Mammary epithelial cell (primary cell): ENCODE measurements at regions of chr10 and their contacts with region 1.

Region 1: GRCh38 chr10:97676770-97677581 is 10.1 kb downstream of the AVPI1 start:
- DNase-seq: peak; percentile 52
- H3K4me3 ChIP-seq: no peak overlapping the region
- H3K27ac ChIP-seq: no peak overlapping the region
- H3K4me1 ChIP-seq: peaks cover 4% of the 10 kb centered on the region
- H3K27me3 ChIP-seq: no peaks in the 10 kb centered on the region
- CTCF ChIP-seq: peak; percentile 87 to 88

Region 2: DNA sequence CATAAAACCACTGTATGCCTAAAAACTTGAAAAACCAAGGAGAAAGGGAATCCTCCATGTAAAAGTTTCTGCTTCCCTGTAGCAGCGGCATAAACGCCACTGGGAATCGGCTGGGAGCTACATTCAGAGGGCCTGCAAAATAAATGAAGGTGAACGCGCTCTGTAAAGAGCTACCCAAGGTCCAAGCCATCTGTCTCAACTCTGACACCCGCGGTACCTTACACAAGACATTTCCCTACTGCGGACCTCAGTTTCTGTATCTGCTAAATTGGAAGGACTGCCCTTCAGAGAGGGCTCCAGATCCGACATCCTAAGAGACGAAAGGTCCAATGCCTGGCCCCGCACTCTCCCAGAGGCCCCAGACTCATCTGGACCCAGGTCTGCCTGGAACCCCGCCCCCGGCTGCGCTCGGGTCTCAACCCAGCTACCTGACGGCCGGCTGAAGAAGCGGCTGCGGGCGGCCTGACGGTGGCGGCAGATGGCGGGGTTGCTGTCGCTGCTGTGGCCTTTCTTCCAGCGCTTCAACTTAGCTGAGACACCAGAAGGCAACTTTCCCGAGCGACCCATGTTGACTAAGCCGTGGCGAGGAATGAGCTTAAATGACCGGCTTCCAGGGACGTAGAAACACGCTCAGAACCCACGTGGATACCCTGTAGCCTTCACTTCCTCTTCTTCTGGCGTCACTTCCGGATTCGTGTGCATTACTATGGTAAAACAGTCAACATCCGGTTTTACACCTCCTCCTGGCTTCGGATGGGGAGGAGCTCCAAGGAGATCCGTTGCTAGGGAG is 276.1 kb before region 1 on chr10 and contains the start of gene RRP12:
- CTCF ChIA-PET with region 1: no interaction called
- dilution Hi-C with region 1: no loop called
- in situ Hi-C with region 1: no loop called
- intact Hi-C with region 1: no loop called
- DNase-seq: peak; percentile 97
- H3K4me3 ChIP-seq: peak within 1 kb of the TSS; percentile 60 to 92 (median 88)
- H3K27ac ChIP-seq: peak within 1 kb of the TSS; percentile 95
- H3K4me1 ChIP-seq: no peaks in the 10 kb centered on the region
- H3K27me3 ChIP-seq: no peaks in the 10 kb centered on the region
- CTCF ChIP-seq: peak in 1 of 2 donors; percentile 19
- total RNA-seq, gene RRP12: 35.8 to 63.1 TPM

Region 3: DNA sequence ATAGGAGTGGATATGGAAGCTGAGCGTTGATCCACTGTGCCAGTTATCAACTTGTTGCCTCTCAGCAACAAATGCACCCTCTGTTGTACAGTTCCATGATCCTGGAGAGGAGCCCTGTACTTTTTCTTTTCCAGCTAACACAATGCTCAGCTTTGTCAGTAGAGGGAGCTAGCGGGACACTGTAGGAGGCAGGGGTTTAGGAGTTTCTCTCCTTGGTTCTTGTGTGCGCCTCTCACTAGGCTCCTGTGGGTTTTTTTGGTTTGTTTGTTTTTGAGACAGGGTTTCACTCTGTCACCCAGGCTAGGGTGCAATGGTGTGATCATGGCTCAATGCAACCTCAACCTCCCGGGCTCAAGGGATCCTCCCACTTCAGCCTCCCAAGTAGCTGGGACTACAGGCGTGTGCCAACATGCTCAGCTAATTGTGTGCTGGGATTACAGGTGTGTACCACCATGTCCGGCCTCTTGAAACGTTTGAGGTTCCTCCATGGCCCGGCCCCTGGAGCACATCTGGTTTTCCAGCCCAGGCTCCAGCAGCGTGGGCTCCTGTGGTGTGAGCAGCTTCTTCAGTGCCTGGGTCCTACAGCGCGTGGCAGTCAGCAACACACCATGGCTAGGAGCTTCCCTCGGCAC is 24.6 kb after region 1 on chr10:
- CTCF ChIA-PET with region 1: interaction called, 3 read pairs
- dilution Hi-C with region 1: no loop called
- in situ Hi-C with region 1: no loop called
- intact Hi-C with region 1: loop called (anchors 1 kb)
- DNase-seq: peak; percentile 75
- H3K4me3 ChIP-seq: no peak overlapping the region
- H3K27ac ChIP-seq: no peak overlapping the region
- H3K4me1 ChIP-seq: peaks cover 14% of the 10 kb centered on the region
- H3K27me3 ChIP-seq: no peaks in the 10 kb centered on the region
- CTCF ChIP-seq: peak; percentile 93 to 95

Region 4: DNA sequence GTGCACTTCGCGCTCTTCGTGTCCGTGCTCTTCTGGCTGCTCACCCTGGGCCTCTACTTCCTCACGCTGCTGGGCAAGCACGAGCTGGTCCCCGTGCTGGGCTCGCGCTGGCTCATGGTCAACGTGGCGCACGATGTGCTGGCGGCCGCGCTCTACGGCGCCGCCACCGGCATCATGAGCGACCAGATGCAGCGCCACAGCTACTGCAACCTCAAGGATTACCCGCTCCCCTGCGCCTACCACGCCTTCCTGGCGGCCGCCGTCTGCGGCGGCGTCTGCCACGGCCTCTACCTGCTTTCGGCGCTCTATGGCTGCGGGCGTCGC is 37.0 kb after region 1 on chr10:
- CTCF ChIA-PET with region 1: no interaction called
- dilution Hi-C with region 1: no loop called
- in situ Hi-C with region 1: no loop called
- intact Hi-C with region 1: loop called (anchors 2 kb)
- DNase-seq: peak; percentile 81
- H3K4me3 ChIP-seq: peak overlapping the region; percentile 46 to 80 (median 72)
- H3K27ac ChIP-seq: peak overlapping the region; percentile 80
- H3K4me1 ChIP-seq: peaks cover 44% of the 10 kb centered on the region
- H3K27me3 ChIP-seq: no peaks in the 10 kb centered on the region
- CTCF ChIP-seq: peak in 1 of 2 donors; percentile 42